Left cardiac atrium (tissue), 4 donors: ENCODE measurements at regions of chr11 and their contacts with region 1.

Region 1: DNA sequence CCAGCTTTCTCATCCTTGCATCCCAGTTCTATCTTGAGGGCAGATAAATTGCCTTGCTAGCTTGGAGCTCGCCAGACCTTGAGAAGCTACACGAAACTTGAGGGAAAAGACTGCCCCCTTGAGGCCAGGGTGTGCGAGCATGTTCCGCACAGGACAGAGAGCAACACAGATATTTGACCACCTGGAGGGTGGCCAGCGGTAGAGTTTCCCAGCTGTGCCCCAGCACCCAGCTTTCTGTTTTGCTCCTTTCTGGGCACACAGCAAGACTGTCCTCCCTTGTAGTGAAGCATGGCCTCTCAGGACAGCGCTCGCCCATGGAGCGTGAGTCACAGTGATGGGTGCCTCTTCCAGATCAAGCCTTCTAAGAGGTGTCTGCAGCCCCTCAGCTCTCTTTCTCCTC is 23.5 kb downstream of the SPATA19 start:
- DNase-seq: peak; percentile 69
- ATAC-seq: peak; percentile 80 to 87

Region 2: DNA sequence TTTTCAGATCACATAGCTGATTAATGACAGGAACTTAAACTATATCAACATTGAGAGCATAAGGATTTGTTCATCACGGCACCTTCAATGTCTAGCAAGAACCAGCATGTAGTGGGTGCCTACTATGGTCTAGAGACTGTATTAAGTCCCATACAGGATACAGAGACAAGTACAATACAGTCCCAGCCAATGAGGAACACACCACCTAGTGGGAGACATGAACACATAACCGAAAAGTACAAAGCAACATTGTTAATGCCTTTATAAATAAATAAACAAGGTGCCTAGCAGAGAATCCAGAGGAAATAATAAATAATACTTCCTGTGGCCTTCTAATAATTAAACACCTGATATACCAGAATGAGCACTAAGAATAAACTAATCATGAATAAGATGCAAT is 201.8 kb before region 1 on chr11:
- intact Hi-C with region 1: loop called in 1 of 2 experiments (anchors 5 kb)
- DNase-seq: no peak
- ATAC-seq: peak in 1 of 2 donors; percentile 61